Posterior vena cava (tissue), 2 donors: ENCODE measurements at regions of chr16 and their contacts with region 1.

Region 1: GRCh38 chr16:24800586-24800985 is 45.2 kb upstream of the SLC5A11 start:
- DNase-seq: no peak

Region 2: GRCh38 chr16:24568392-24568791 is 232.2 kb before region 1 on chr16:
- intact Hi-C with region 1: loop called (anchors 10 kb)
- DNase-seq: no peak